ENCODE measurements at regions of chr6 and their contacts with region 1.

Region 1: GRCh38 chr6:3612341-3613041 is 139.0 kb downstream of the PXDC1 start:
- DNase-seq: peak; percentile 98
- H3K4me3 Mint-ChIP-seq: peak overlapping the region; percentile 28
- H3K27ac Mint-ChIP-seq: peak overlapping the region; percentile 36
- H3K4me1 Mint-ChIP-seq: peaks cover 21% of the 10 kb centered on the region
- H3K27me3 Mint-ChIP-seq: no peaks in the 10 kb centered on the region
- CTCF ChIP-seq: no peak

Region 2: GRCh38 chr6:3500262-3501016 is 112.1 kb before region 1 on chr6:
- CTCF ChIA-PET with region 1: no interaction called
- POLR2A ChIA-PET with region 1: interaction called, 15 read pairs
- intact Hi-C with region 1: no loop called
- DNase-seq: peak; percentile 89
- H3K4me3 Mint-ChIP-seq: peak overlapping the region; percentile 39
- H3K27ac Mint-ChIP-seq: peak overlapping the region; percentile 74
- H3K4me1 Mint-ChIP-seq: peaks cover 15% of the 10 kb centered on the region
- H3K27me3 Mint-ChIP-seq: peaks cover 17% of the 10 kb centered on the region
- CTCF ChIP-seq: no peak

Region 3: GRCh38 chr6:3526962-3527650 is 85.4 kb before region 1 on chr6:
- CTCF ChIA-PET with region 1: interaction called, 3 read pairs
- POLR2A ChIA-PET with region 1: interaction called, 31 read pairs
- intact Hi-C with region 1: no loop called
- DNase-seq: peak; percentile 91
- H3K4me3 Mint-ChIP-seq: peak overlapping the region; percentile 18
- H3K27ac Mint-ChIP-seq: peak overlapping the region; percentile 81
- H3K4me1 Mint-ChIP-seq: peaks cover 35% of the 10 kb centered on the region
- H3K27me3 Mint-ChIP-seq: no peaks in the 10 kb centered on the region
- CTCF ChIP-seq: no peak

Measured in MCF 10A (cell line).